GM12878 (cell line): ENCODE measurements at regions of chr7 and their contacts with region 1.

Region 1: GRCh38 chr7:31648288-31648687 is 38.7 kb upstream of the PPP1R17 start:
- DNase-seq: no peak
- ATAC-seq: no peak
- H3K4me3 ChIP-seq: no peak overlapping the region
- H3K27ac ChIP-seq: no peak overlapping the region
- H3K4me1 ChIP-seq: no peaks in the 10 kb centered on the region
- H3K27me3 ChIP-seq: peaks cover 1 to 4% of the 10 kb centered on the region in 2 experiments; a peak in 3 of 4 replicates
- CTCF ChIP-seq: no peak
- EP300 ChIP-seq: no peak
- POLR2A ChIP-seq: no peak
- RAD21 ChIP-seq: no peak

Region 2: GRCh38 chr7:31695859-31696614 is 47.7 kb after region 1 on chr7:
- CTCF ChIA-PET with region 1: no interaction called
- POLR2A ChIA-PET with region 1: no interaction called
- RAD21 ChIA-PET with region 1: interaction called, 4 read pairs
- SMC1A ChIA-PET with region 1: interaction called, 10 read pairs
- in situ Hi-C with region 1: no loop called
- intact Hi-C with region 1: no loop called
- DNase-seq: no peak
- ATAC-seq: peak; percentile 81
- H3K4me3 ChIP-seq: no peak overlapping the region
- H3K27ac ChIP-seq: no peak overlapping the region
- H3K4me1 ChIP-seq: no peaks in the 10 kb centered on the region
- H3K27me3 ChIP-seq: no peaks in the 10 kb centered on the region; a peak in 3 of 4 replicates
- CTCF ChIP-seq: no peak
- EP300 ChIP-seq: no peak
- POLR2A ChIP-seq: no peak
- RAD21 ChIP-seq: no peak

Region 3: DNA sequence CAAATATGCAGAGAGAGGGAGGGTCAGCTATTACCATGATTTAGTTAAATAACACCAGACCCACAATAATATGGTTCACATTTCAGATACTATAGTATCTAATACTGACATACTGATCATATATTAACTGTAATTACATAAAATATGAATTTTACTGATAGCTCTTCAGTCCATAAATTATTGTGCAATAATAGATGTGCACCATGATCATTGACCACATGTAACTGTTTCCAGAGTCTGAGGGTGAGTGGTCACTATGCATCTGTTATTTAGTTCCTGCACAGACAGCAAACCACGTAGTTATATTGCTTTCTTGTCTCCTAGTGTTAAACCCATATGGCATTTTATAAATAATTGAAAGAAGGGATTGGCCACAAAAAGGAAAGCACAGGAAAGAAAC is 68.1 kb after region 1 on chr7:
- CTCF ChIA-PET with region 1: no interaction called
- POLR2A ChIA-PET with region 1: no interaction called
- RAD21 ChIA-PET with region 1: no interaction called
- SMC1A ChIA-PET with region 1: no interaction called
- in situ Hi-C with region 1: no loop called
- intact Hi-C with region 1: loop called (anchors 5 kb)
- DNase-seq: no peak
- ATAC-seq: no peak
- H3K4me3 ChIP-seq: no peak overlapping the region
- H3K27ac ChIP-seq: no peak overlapping the region
- H3K4me1 ChIP-seq: no peaks in the 10 kb centered on the region
- H3K27me3 ChIP-seq: no peaks in the 10 kb centered on the region; a peak in 1 of 4 replicates
- CTCF ChIP-seq: no peak
- EP300 ChIP-seq: no peak
- POLR2A ChIP-seq: no peak
- RAD21 ChIP-seq: no peak